HCT116 (cell line): ENCODE measurements at regions of chr1 and their contacts with region 1.

Region 1: GRCh38 chr1:248858891-248859889 is at the start of gene ZNF692:
- DNase-seq: peak; percentile 95
- ATAC-seq: peak; percentile 86
- H3K4me3 ChIP-seq: peak within 1 kb of the TSS; percentile 66 to 83
- H3K27ac ChIP-seq: peak within 1 kb of the TSS; percentile 79
- H3K4me1 ChIP-seq: peaks cover 12 to 41% of the 10 kb centered on the region in 2 experiments
- H3K27me3 ChIP-seq: no peaks in the 10 kb centered on the region
- CTCF ChIP-seq: no peak
- POLR2A ChIP-seq: peak; percentile 83
- RAD21 ChIP-seq: no peak
- total RNA-seq, gene ZNF692: 76.2 TPM

Region 2: GRCh38 chr1:248576260-248576980 is 282.8 kb before region 1 on chr1:
- CTCF ChIA-PET with region 1: no interaction called
- POLR2A ChIA-PET with region 1: no interaction called
- RAD21 ChIA-PET with region 1: no interaction called
- intact Hi-C with region 1: no loop called
- DNase-seq: no peak
- ATAC-seq: no peak
- H3K4me3 ChIP-seq: no peak overlapping the region
- H3K27ac ChIP-seq: no peak overlapping the region
- H3K4me1 ChIP-seq: no peaks in the 10 kb centered on the region
- H3K27me3 ChIP-seq: no peaks in the 10 kb centered on the region
- CTCF ChIP-seq: no peak
- POLR2A ChIP-seq: no peak
- RAD21 ChIP-seq: no peak

Region 3: GRCh38 chr1:248807067-248807737 is 52.0 kb before region 1 on chr1:
- CTCF ChIA-PET with region 1: no interaction called
- POLR2A ChIA-PET with region 1: no interaction called
- RAD21 ChIA-PET with region 1: no interaction called
- intact Hi-C with region 1: no loop called
- DNase-seq: peak; percentile 4
- ATAC-seq: peak; percentile 94
- H3K4me3 ChIP-seq: no peak overlapping the region
- H3K27ac ChIP-seq: no peak overlapping the region
- H3K4me1 ChIP-seq: no peaks in the 10 kb centered on the region
- H3K27me3 ChIP-seq: no peaks in the 10 kb centered on the region
- CTCF ChIP-seq: peak; percentile 67 to 84 (median 77)
- POLR2A ChIP-seq: no peak
- RAD21 ChIP-seq: peak; percentile 86

Region 4: GRCh38 chr1:248825909-248826760 is 33.1 kb before region 1 on chr1 and contains the start of gene SH3BP5L:
- CTCF ChIA-PET with region 1: no interaction called
- POLR2A ChIA-PET with region 1: interaction called, 4 read pairs
- RAD21 ChIA-PET with region 1: no interaction called
- intact Hi-C with region 1: loop called (anchors 1 kb)
- DNase-seq: peak; percentile 95
- ATAC-seq: peak; percentile 89
- H3K4me3 ChIP-seq: peak within 1 kb of the TSS; percentile 98 to 99
- H3K27ac ChIP-seq: peak within 1 kb of the TSS; percentile 78
- H3K4me1 ChIP-seq: peaks cover 16 to 34% of the 10 kb centered on the region in 2 experiments
- H3K27me3 ChIP-seq: no peaks in the 10 kb centered on the region
- CTCF ChIP-seq: peak; percentile 42 to 81 (median 74); a peak in 5 of 6 replicates
- POLR2A ChIP-seq: no peak
- RAD21 ChIP-seq: no peak; the same call in 1 of the 2 replicates
- total RNA-seq, gene SH3BP5L: 22.3 TPM

Region 5: DNA sequence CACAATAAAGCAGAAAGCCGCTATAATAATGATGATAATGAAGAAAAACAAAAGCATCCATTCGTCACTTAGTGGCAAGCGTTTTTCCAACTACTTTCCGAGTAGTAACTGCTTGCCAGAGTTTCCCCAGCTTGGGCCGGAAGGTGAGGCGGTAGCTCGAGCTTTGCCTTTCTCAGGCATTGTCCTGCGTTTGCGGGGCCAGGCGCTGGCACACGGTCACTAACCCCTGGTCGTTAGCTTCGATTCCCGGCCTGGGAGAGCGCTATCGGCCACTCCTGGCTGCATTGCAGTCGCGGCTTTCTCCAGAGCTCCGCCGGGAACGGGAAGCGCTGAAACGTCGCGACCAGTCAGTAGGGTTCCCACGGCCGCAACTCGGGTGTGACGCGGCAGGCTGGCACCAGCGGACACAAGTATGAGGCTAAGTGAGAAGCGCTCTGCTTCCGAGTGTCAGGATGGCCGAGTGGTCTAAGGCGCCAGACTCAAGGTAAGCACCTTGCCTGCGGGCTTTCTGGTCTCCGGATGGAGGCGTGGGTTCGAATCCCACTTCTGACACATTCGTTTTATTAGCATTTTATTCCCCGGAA is 14.3 kb after region 1 on chr1:
- CTCF ChIA-PET with region 1: interaction called, 18 read pairs
- POLR2A ChIA-PET with region 1: interaction called, 11 read pairs
- RAD21 ChIA-PET with region 1: interaction called in 1 of 2 experiments, 3 read pairs
- intact Hi-C with region 1: loop called (anchors 1 kb)
- DNase-seq: peak; percentile 93
- ATAC-seq: peak; percentile 82
- H3K4me3 ChIP-seq: peak overlapping the region; percentile 51 to 64
- H3K27ac ChIP-seq: peak overlapping the region; percentile 74
- H3K4me1 ChIP-seq: peaks cover 10 to 25% of the 10 kb centered on the region in 2 experiments
- H3K27me3 ChIP-seq: no peaks in the 10 kb centered on the region
- CTCF ChIP-seq: no peak
- POLR2A ChIP-seq: no peak
- RAD21 ChIP-seq: no peak

Region 6: GRCh38 chr1:248884632-248885295 is 25.6 kb after region 1 on chr1:
- CTCF ChIA-PET with region 1: no interaction called
- POLR2A ChIA-PET with region 1: no interaction called
- RAD21 ChIA-PET with region 1: no interaction called
- intact Hi-C with region 1: no loop called
- DNase-seq: no peak
- ATAC-seq: peak; percentile 47
- H3K4me3 ChIP-seq: no peak overlapping the region
- H3K27ac ChIP-seq: no peak overlapping the region
- H3K4me1 ChIP-seq: no peaks in the 10 kb centered on the region
- H3K27me3 ChIP-seq: no peaks in the 10 kb centered on the region
- CTCF ChIP-seq: peak; percentile 10 to 18 (median 14); a peak in 1 of 6 replicates
- POLR2A ChIP-seq: no peak
- RAD21 ChIP-seq: peak; percentile 10; the same call in 1 of the 2 replicates

Region 7: GRCh38 chr1:248906009-248906752 is 47.0 kb after region 1 on chr1 and contains the start of gene PGBD2:
- CTCF ChIA-PET with region 1: interaction called, 6 read pairs
- POLR2A ChIA-PET with region 1: interaction called, 4 read pairs
- RAD21 ChIA-PET with region 1: no interaction called
- intact Hi-C with region 1: loop called (anchors 1 kb)
- DNase-seq: peak; percentile 89
- ATAC-seq: peak; percentile 93
- H3K4me3 ChIP-seq: peak within 1 kb of the TSS; percentile 69 to 80
- H3K27ac ChIP-seq: peak within 1 kb of the TSS; percentile 77
- H3K4me1 ChIP-seq: peaks cover 0 to 22% of the 10 kb centered on the region in 2 experiments; a peak in 3 of 4 replicates
- H3K27me3 ChIP-seq: no peaks in the 10 kb centered on the region
- CTCF ChIP-seq: peak; percentile 61 to 82 (median 64)
- POLR2A ChIP-seq: peak; percentile 72
- RAD21 ChIP-seq: peak; percentile 68
- total RNA-seq, gene PGBD2: 5.1 TPM